ENCODE measurements at regions of chr15 and their contacts with region 1.

Region 1: DNA sequence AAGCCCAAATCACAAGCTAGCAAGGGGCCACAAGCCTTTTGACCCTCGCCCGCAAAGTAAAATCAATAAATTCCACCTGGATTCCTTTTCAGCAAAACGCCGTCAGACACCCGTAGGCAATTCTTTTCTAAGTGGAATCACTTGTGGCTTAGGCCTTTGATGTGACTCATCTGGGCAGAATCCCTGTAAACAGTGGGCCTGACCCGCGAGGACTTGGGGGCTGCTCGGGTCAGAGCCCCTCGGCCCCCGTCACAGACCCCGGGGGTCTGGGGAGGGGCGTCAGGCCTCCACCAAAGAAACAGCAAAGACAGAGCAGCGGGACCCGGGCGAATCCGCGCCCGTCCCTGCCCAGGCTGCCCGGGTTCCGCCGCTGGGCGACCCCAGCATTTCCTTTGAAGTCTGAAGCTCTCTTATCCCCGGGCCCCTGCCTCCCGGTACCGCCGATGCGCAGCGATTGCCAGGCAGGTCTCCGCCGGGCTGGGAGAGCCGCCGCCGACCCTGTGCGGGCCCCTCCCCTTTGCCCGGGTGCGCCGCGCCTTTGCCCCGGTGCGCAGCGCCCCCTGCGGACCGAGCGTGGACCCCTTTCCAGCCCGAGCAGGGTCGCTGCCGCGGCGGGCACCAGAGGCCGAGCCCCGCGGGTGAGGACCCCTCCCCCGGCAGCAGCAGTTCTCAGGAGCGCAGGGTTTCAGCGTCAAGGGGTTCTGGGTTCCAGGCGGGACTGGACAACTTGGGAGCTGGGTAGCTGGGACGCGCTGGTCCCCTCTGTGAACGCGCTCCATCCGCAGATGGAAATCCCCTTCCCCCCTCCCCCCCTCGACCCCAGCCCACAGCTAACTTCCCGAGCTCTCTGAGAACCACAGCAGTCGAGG is 178.3 kb downstream of the UACA start:
- DNase-seq: no peak
- H3K4me3 ChIP-seq: peak overlapping the region; percentile 44
- CTCF ChIP-seq: peak; percentile 58

Region 2: GRCh38 chr15:70596354-70597055 is 11.4 kb after region 1 on chr15:
- CTCF ChIA-PET with region 1: interaction called, 13 read pairs
- POLR2A ChIA-PET with region 1: no interaction called
- DNase-seq: peak; percentile 53
- H3K4me3 ChIP-seq: no peak overlapping the region
- CTCF ChIP-seq: no peak

Measured in AG04449 (cell line).